ENCODE measurements at regions of chr13 and their contacts with region 1.

Region 1: GRCh38 chr13:27449936-27450828 is at the start of gene MTIF3:
- DNase-seq: peak; percentile 79 to 96
- H3K4me3 ChIP-seq: peak within 1 kb of the TSS; percentile 93 to 99
- H3K27ac ChIP-seq: peak within 1 kb of the TSS; percentile 96 to 97
- H3K4me1 ChIP-seq: peaks cover 3 to 15% of the 10 kb centered on the region in 2 donors
- H3K27me3 ChIP-seq: no peaks in the 10 kb centered on the region
- CTCF ChIP-seq: peak in 2 of 3 experiments; percentile 2 to 8
- total RNA-seq, gene MTIF3: 23.6 TPM

Region 2: DNA sequence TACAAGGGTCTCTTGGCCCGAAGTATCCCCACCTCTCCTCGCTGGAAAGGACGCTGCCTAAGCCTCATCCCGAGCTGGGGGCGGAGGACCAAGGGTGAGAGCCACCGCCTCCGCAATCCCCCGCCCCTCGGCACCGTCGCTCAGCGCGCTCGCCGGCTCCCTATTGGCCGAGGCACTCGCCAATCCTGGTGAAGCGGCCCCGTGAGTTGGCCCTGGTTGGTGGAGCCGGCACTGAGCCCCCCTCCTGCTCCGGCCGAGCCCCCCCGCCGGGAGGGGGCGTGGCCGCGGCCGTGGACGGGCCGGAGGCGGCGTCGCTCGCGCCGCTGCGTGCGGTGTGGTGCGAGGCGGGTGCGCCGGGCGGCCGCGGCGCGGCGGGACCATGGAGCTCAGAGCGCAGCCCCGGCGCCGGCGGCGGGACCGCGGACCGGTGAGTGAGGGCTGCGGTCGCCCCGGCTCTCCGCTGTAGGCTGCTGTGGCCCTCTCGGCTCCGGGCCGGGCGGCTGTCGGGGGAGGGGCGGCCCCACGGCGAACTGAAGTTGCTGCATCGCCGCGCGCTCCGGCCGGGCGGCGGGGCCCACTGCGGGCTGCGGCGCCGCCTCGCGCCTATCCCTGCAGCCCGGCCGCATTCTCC is 892.7 kb before region 1 on chr13 and contains the start of gene WASF3:
- intact Hi-C with region 1: loop called (anchors 10 kb)
- DNase-seq: peak; percentile 36 to 94
- H3K4me3 ChIP-seq: peak within 1 kb of the TSS; percentile 70 to 89
- H3K27ac ChIP-seq: peak within 1 kb of the TSS in 1 of 2 donors; percentile 59
- H3K4me1 ChIP-seq: peaks cover 6 to 7% of the 10 kb centered on the region in 2 donors
- H3K27me3 ChIP-seq: no peaks in the 10 kb centered on the region
- CTCF ChIP-seq: peak in 1 of 3 experiments; percentile 6
- total RNA-seq, gene WASF3: 14.3 TPM

Region 3: GRCh38 chr13:26839682-26840081 is 610.5 kb before region 1 on chr13:
- intact Hi-C with region 1: no loop called
- DNase-seq: no peak
- H3K4me3 ChIP-seq: no peak overlapping the region
- H3K27ac ChIP-seq: no peak overlapping the region
- H3K4me1 ChIP-seq: no peaks in the 10 kb centered on the region
- H3K27me3 ChIP-seq: no peaks in the 10 kb centered on the region
- CTCF ChIP-seq: no peak

Region 4: GRCh38 chr13:27182844-27183497 is 267.2 kb before region 1 on chr13:
- intact Hi-C with region 1: loop called (anchors 5 kb)
- DNase-seq: peak; percentile 46 to 91
- H3K4me3 ChIP-seq: peak overlapping the region in 1 of 2 donors; percentile 21
- H3K27ac ChIP-seq: peak overlapping the region in 1 of 2 donors; percentile 45
- H3K4me1 ChIP-seq: peaks cover 3% of the 10 kb centered on the region in 2 donors
- H3K27me3 ChIP-seq: no peaks in the 10 kb centered on the region
- CTCF ChIP-seq: no peak

Region 5: GRCh38 chr13:27270594-27271520 is 179.3 kb before region 1 on chr13 and contains the start of gene RASL11A:
- intact Hi-C with region 1: loop called (anchors 1 kb)
- DNase-seq: peak; percentile 44 to 95
- H3K4me3 ChIP-seq: peak within 1 kb of the TSS; percentile 67 to 84
- H3K27ac ChIP-seq: peak within 1 kb of the TSS; percentile 91 to 93
- H3K4me1 ChIP-seq: peaks cover 4 to 30% of the 10 kb centered on the region in 2 donors
- H3K27me3 ChIP-seq: no peaks in the 10 kb centered on the region
- CTCF ChIP-seq: peak; percentile 91 to 98 (median 94)
- total RNA-seq, gene RASL11A: 50.4 TPM

Region 6: GRCh38 chr13:27374650-27375049 is 75.5 kb before region 1 on chr13:
- intact Hi-C with region 1: loop called (anchors 2 kb)
- DNase-seq: peak in 1 of 2 donors; percentile 85
- H3K4me3 ChIP-seq: no peak overlapping the region
- H3K27ac ChIP-seq: no peak overlapping the region
- H3K4me1 ChIP-seq: no peaks in the 10 kb centered on the region
- H3K27me3 ChIP-seq: no peaks in the 10 kb centered on the region
- CTCF ChIP-seq: peak; percentile 39 to 75 (median 61)

Region 7: GRCh38 chr13:27424246-27425157 is 25.7 kb before region 1 on chr13 and contains the start of gene GTF3A:
- intact Hi-C with region 1: loop called (anchors 1 kb)
- DNase-seq: peak; percentile 37 to 87
- H3K4me3 ChIP-seq: peak within 1 kb of the TSS; percentile 82 to 94
- H3K27ac ChIP-seq: peak within 1 kb of the TSS; percentile 84 to 87
- H3K4me1 ChIP-seq: peaks cover 9 to 22% of the 10 kb centered on the region in 2 donors
- H3K27me3 ChIP-seq: no peaks in the 10 kb centered on the region
- CTCF ChIP-seq: no peak
- total RNA-seq, gene GTF3A: 197 TPM

Region 8: GRCh38 chr13:27523346-27524073 is 73.3 kb after region 1 on chr13:
- intact Hi-C with region 1: no loop called
- DNase-seq: no peak
- H3K4me3 ChIP-seq: no peak overlapping the region
- H3K27ac ChIP-seq: no peak overlapping the region
- H3K4me1 ChIP-seq: no peaks in the 10 kb centered on the region
- H3K27me3 ChIP-seq: no peaks in the 10 kb centered on the region
- CTCF ChIP-seq: no peak

Measured in ascending aorta (tissue), 2 donors.